ENCODE measurements at regions of chr12 and their contacts with region 1.

Region 1: DNA sequence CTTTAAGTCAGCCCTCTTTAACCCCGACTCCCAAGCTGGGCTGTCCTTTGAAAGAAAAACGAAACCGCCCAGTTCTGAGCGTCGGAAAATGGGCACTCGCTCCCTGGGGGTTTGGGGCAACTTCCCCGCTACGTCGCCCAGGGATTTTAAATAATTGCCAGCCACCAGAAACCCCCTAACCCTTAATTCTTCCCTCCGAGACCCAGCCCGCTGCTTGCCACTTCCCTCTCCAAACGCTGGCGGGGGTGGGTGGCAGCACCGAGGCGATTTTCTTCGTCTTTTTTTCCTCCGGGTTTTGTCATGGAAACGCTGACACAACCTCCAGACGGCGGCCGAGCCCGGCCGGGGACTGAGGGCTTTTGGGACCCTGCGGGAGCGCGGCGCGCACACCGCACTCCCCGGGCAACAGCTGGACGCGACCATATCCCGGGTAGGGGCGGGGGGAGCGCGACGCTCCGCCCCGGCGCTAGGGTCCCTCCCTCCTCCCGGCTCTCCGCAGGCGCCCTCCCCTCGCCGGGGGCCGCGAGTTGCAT is at the start of gene CHST11:
- DNase-seq: peak; percentile 77
- H3K4me3 Mint-ChIP-seq: peak within 1 kb of the TSS; percentile 99
- H3K27ac Mint-ChIP-seq: peak within 1 kb of the TSS; percentile 99
- H3K4me1 Mint-ChIP-seq: peaks cover 43% of the 10 kb centered on the region
- H3K27me3 Mint-ChIP-seq: no peaks in the 10 kb centered on the region
- total RNA-seq, gene CHST11: 69.8 and 70.7 TPM in 2 replicates

Region 2: DNA sequence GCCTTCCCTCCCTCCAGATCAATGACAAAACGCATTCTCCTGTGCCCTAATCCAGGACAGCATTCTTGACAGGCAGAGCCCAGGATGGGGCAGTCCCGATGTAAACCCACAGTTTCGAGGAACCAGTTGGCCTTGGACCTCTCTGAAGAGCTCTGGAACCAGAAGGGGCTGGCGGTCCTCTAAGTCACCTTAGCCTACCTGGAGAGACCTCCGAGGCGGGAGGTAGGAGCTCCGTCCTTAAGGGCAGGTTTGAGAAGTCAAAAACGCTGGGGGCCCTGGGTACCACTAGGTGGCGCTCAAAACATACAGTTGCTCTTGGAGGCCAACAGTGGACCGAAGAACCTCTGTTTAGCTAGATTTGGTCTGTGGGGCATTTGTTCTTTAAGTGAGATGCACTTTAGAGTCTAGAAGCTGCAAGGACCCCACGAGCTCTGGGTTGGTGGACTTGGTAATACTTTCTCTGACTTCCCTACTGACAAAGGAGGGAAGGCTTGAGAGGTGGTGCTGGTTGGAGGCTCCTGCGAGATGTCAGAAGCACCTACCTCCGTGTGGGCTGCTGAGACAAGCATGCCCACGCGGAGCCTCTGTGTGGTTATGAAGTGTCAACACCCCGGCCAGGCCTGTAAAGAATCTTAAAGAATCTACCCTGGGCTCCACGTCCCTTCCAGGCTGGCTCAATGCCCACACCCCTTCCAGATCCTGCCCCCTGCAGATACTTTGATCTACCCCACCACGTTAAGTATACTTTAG is 74.6 kb before region 1 on chr12:
- intact Hi-C with region 1: loop called (anchors 1 kb)
- DNase-seq: peak; percentile 69
- H3K4me3 Mint-ChIP-seq: peak overlapping the region; percentile 52
- H3K27ac Mint-ChIP-seq: peak overlapping the region; percentile 33
- H3K4me1 Mint-ChIP-seq: peaks cover 20% of the 10 kb centered on the region
- H3K27me3 Mint-ChIP-seq: peaks cover 2% of the 10 kb centered on the region

Region 3: DNA sequence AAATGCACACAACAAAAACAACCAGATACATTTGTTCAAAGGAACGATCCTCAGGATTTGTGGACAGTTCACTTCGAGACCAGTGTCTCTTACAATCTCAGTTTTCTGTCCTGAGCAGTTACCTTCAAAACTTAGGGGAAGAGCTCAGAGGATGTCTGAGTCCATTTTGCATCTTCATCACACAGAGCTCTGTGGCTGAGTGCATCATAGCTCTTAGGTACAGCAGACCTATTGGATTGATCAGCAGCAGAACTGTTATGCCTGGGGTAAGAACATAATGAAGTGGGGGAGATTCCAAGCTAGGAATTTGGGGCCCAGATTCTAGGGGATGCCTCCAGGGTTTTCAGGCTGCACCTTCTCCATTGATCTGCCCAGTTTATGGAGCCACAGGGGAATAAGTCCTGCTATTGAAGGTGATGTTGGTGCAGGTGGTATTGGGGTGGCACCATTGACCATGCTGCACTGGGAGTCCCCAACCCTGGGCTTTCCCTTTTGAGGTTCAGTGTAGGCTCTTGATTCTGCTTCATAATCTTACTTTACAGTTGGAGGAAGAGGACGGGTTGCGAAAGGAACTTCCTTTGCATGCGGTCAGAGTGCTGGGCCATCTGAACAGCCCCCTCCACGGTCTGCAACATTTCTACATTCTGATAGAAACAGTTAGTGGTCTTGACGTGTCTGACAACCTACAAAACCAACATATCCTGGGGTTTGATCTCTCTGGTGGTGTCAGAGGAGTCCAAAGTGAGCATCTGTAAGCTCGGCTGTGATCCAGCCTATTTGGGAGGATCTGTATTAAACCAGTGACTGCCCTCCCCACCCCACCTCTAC is 113.1 kb after region 1 on chr12:
- intact Hi-C with region 1: loop called (anchors 2 kb)
- DNase-seq: peak; percentile 58
- H3K4me3 Mint-ChIP-seq: peak overlapping the region; percentile 64
- H3K27ac Mint-ChIP-seq: peak overlapping the region; percentile 89
- H3K4me1 Mint-ChIP-seq: peaks cover 63% of the 10 kb centered on the region
- H3K27me3 Mint-ChIP-seq: no peaks in the 10 kb centered on the region

Region 4: GRCh38 chr12:104680066-104680465 is 223.6 kb after region 1 on chr12:
- intact Hi-C with region 1: loop called (anchors 1 kb)
- DNase-seq: no peak
- H3K4me3 Mint-ChIP-seq: no peak overlapping the region
- H3K27ac Mint-ChIP-seq: peak overlapping the region; percentile 85
- H3K4me1 Mint-ChIP-seq: peaks cover 84% of the 10 kb centered on the region
- H3K27me3 Mint-ChIP-seq: no peaks in the 10 kb centered on the region

Region 5: GRCh38 chr12:104710940-104711689 is 254.6 kb after region 1 on chr12:
- intact Hi-C with region 1: no loop called
- DNase-seq: no peak
- H3K4me3 Mint-ChIP-seq: no peak overlapping the region
- H3K27ac Mint-ChIP-seq: no peak overlapping the region
- H3K4me1 Mint-ChIP-seq: peaks cover 67% of the 10 kb centered on the region
- H3K27me3 Mint-ChIP-seq: no peaks in the 10 kb centered on the region

Region 6: DNA sequence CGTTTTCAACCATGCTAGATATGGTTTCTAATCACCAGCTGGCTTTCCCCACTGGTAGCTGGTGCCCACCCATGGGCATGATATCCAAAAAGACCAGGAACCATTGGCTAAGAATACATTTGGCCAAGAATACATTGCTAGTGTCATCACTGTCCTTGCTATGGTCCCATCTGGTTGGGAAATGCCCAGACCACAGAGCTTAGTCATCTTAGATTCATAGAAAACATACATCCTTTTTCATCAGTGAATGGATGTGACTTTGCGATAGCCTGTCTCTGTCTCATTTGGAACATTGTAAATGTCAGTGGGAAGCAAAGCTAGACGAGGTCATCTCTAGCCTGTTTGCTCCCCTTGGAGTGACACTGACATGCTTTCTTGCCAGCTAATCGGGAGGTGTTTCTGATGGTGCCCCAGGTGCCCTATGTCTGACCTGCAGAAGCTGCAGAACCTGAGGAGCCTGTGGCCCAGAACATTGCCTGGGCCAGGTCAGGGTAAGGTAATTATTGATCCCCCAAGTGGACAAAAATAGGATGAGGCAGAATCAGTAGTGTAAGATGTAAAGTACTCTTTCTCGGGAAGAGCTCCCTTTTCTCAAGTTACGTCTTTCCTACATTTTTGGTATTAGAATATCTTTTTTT is 306.8 kb after region 1 on chr12:
- intact Hi-C with region 1: loop called (anchors 1 kb)
- DNase-seq: no peak
- H3K4me3 Mint-ChIP-seq: peak overlapping the region; percentile 76
- H3K27ac Mint-ChIP-seq: peak overlapping the region; percentile 91
- H3K4me1 Mint-ChIP-seq: peaks cover 70% of the 10 kb centered on the region
- H3K27me3 Mint-ChIP-seq: no peaks in the 10 kb centered on the region

Region 7: GRCh38 chr12:104958009-104958945 is 501.8 kb after region 1 on chr12 and contains the start of gene SLC41A2:
- intact Hi-C with region 1: loop called (anchors 1 kb)
- DNase-seq: peak; percentile 80
- H3K4me3 Mint-ChIP-seq: peak within 1 kb of the TSS; percentile 90
- H3K27ac Mint-ChIP-seq: peak within 1 kb of the TSS; percentile 96
- H3K4me1 Mint-ChIP-seq: peaks cover 44% of the 10 kb centered on the region
- H3K27me3 Mint-ChIP-seq: peaks cover 24% of the 10 kb centered on the region
- total RNA-seq, gene SLC41A2: 16.4 and 19.0 TPM in 2 replicates